T-cell (primary cell): ENCODE measurements at regions of chr7 and their contacts with region 1.

Region 1: DNA sequence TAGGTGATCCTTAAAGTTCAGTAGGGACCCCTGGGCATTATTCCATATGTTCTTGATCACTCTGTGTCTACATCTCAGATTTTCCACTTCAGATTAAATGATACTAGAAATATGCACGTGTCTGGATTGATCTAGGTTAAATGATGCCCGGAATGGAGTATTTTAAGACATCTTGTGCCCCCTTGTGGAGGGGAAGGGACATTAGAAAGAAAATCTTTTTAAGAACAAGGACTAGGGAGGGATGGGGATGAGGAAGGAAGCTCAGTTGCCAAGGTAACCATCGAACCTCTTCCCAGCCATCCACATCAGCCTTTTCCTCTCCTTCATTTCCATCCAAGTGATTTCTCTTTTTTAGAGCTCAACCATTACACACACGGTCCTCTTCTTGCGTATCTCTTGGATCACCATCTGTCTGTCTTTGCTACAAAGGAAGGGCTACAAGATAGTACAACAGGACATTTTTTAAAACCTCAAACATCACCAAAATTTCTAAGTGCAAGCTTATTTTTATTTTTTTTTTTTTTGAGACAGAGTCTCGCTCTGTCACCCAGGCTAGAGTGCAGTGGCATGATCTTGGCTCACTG is 40.5 kb downstream of the PRSS2 start:
- DNase-seq: peak in 10 of 35 experiments; percentile 30 to 85 (median 54)
- ATAC-seq: no peak
- H3K4me3 ChIP-seq: no peak overlapping the region
- H3K4me3 Mint-ChIP-seq: peak overlapping the region; percentile 54 to 93 (median 64)
- H3K27ac ChIP-seq: peak overlapping the region; percentile 97
- H3K27ac Mint-ChIP-seq: peak overlapping the region; percentile 100
- H3K4me1 ChIP-seq: peaks cover 72 to 76% of the 10 kb centered on the region in 2 experiments
- H3K4me1 Mint-ChIP-seq: peaks cover 81 to 94% (median 89%) of the 10 kb centered on the region in 3 donors
- H3K27me3 ChIP-seq: no peaks in the 10 kb centered on the region
- H3K27me3 Mint-ChIP-seq: no peaks in the 10 kb centered on the region

Region 2: GRCh38 chr7:142535123-142535779 is 276.0 kb before region 1 on chr7:
- CTCF ChIA-PET with region 1: interaction called, 3 to 11 read pairs
- POLR2A ChIA-PET with region 1: interaction called in 1 of 2 experiments, 4 read pairs
- DNase-seq: peak in 34 of 35 experiments; percentile 29 to 81 (median 53)
- ATAC-seq: peak; percentile 79 to 85 (median 82)
- H3K4me3 ChIP-seq: peak overlapping the region in 1 of 2 donors; percentile 8
- H3K4me3 Mint-ChIP-seq: peak overlapping the region; percentile 66 to 75 (median 68)
- H3K27ac ChIP-seq: peak overlapping the region; percentile 52
- H3K27ac Mint-ChIP-seq: peak overlapping the region; percentile 72 to 86
- H3K4me1 ChIP-seq: peaks cover 14 to 16% of the 10 kb centered on the region in 2 experiments
- H3K4me1 Mint-ChIP-seq: peaks cover 27 to 33% (median 28%) of the 10 kb centered on the region in 3 donors
- H3K27me3 ChIP-seq: no peaks in the 10 kb centered on the region
- H3K27me3 Mint-ChIP-seq: no peaks in the 10 kb centered on the region

Region 3: GRCh38 chr7:142632291-142633134 is 178.7 kb before region 1 on chr7:
- CTCF ChIA-PET with region 1: interaction called, 8 to 26 read pairs
- POLR2A ChIA-PET with region 1: interaction called, 8 to 10 read pairs
- DNase-seq: peak in 32 of 35 experiments; percentile 9 to 82 (median 42)
- ATAC-seq: peak; percentile 50 to 75 (median 70)
- H3K4me3 ChIP-seq: no peak overlapping the region
- H3K4me3 Mint-ChIP-seq: peak overlapping the region in 1 of 3 donors; percentile 34
- H3K27ac ChIP-seq: no peak overlapping the region
- H3K27ac Mint-ChIP-seq: peak overlapping the region in 1 of 2 donors; percentile 52
- H3K4me1 ChIP-seq: peaks cover 0 to 2% of the 10 kb centered on the region in 2 experiments
- H3K4me1 Mint-ChIP-seq: peaks cover 9 to 17% (median 17%) of the 10 kb centered on the region in 3 donors
- H3K27me3 ChIP-seq: no peaks in the 10 kb centered on the region
- H3K27me3 Mint-ChIP-seq: peaks cover 0 to 3% of the 10 kb centered on the region in 2 donors

Region 4: GRCh38 chr7:142711746-142712619 is 99.3 kb before region 1 on chr7:
- CTCF ChIA-PET with region 1: interaction called, 9 to 30 read pairs
- POLR2A ChIA-PET with region 1: interaction called, 4 to 13 read pairs
- DNase-seq: peak in 13 of 35 experiments; percentile 5 to 59 (median 23)
- ATAC-seq: peak; percentile 70 to 84 (median 76)
- H3K4me3 ChIP-seq: peak overlapping the region in 1 of 2 donors; percentile 39
- H3K4me3 Mint-ChIP-seq: peak overlapping the region; percentile 81 to 88 (median 82)
- H3K27ac ChIP-seq: peak overlapping the region; percentile 54
- H3K27ac Mint-ChIP-seq: peak overlapping the region; percentile 84 to 93
- H3K4me1 ChIP-seq: peaks cover 32 to 46% of the 10 kb centered on the region in 2 experiments
- H3K4me1 Mint-ChIP-seq: peaks cover 49 to 84% (median 70%) of the 10 kb centered on the region in 3 donors
- H3K27me3 ChIP-seq: no peaks in the 10 kb centered on the region
- H3K27me3 Mint-ChIP-seq: no peaks in the 10 kb centered on the region

Region 5: DNA sequence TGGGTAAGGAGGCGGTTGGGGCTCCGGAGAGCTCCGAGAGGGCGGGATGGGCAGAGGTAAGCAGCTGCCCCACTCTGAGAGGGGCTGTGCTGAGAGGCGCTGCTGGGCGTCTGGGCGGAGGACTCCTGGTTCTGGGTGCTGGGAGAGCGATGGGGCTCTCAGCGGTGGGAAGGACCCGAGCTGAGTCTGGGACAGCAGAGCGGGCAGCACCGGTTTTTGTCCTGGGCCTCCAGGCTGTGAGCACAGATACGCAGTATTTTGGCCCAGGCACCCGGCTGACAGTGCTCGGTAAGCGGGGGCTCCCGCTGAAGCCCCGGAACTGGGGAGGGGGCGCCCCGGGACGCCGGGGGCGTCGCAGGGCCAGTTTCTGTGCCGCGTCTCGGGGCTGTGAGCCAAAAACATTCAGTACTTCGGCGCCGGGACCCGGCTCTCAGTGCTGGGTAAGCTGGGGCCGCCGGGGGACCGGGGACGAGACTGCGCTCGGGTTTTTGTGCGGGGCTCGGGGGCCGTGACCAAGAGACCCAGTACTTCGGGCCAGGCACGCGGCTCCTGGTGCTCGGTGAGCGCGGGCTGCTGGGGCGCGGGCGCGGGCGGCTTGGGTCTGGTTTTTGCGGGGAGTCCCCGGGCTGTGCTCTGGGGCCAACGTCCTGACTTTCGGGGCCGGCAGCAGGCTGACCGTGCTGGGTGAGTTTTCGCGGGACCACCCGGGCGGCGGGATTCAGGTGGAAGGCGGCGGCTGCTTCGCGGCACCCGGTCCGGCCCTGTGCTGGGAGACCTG is 14.4 kb before region 1 on chr7:
- CTCF ChIA-PET with region 1: interaction called, 12 to 116 read pairs
- POLR2A ChIA-PET with region 1: interaction called, 187 to 577 read pairs
- DNase-seq: peak in 4 of 35 experiments; percentile 29 to 66 (median 42)
- ATAC-seq: peak in 2 of 4 experiments; percentile 8 to 9
- H3K4me3 ChIP-seq: peak overlapping the region; percentile 92 to 97
- H3K4me3 Mint-ChIP-seq: peak overlapping the region; percentile 93 to 100 (median 99)
- H3K27ac ChIP-seq: peak overlapping the region; percentile 97
- H3K27ac Mint-ChIP-seq: peak overlapping the region; percentile 100
- H3K4me1 ChIP-seq: peaks cover 35 to 59% of the 10 kb centered on the region in 2 experiments
- H3K4me1 Mint-ChIP-seq: peaks cover 67 to 73% (median 70%) of the 10 kb centered on the region in 3 donors
- H3K27me3 ChIP-seq: no peaks in the 10 kb centered on the region
- H3K27me3 Mint-ChIP-seq: peaks cover 0 to 3% of the 10 kb centered on the region in 2 donors